GM10248 (cell line): ENCODE measurements at regions of chr12 and their contacts with region 1.

Region 1: DNA sequence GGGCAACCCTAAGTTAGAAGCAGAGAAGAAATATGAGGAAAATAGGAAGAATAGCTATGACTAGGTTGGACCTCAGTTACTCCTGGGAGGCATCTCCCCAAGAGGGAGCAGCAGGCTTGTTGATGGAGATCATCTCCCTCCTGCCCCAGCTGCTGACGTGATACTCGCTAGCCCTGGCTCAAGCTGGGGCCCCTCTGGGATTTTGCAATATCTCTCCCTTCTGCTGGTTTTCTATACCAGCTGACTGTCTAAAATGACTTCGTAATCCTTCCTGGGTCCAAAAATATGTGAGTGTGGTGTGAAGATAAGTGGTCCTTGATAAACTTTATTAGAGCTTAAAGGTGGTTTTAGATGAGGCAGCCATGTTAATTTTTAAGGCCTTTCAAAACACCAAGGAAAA is 4.5 kb upstream of the HECTD4 start:
- DNase-seq: no peak
- CTCF ChIP-seq: no peak

Region 2: DNA sequence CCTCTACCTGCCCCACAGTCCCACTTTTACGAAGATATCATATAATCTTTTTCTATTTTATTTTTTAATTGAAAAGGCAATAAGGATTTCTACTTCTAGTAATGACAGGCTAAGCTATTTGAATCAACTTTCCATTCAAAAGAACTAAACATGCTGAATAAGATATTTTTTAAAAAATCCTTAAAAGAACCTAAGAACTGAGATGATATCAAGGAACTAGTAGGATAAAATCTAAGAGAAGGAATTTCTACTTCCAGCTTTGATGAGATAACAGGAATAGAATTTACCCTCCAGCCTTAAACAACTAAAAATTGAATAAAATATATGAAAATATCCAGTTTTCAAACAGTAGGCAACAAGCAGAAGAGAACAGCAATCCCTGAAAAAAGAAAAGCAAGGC is 442.8 kb before region 1 on chr12:
- CTCF ChIA-PET with region 1: interaction called, 16 read pairs
- POLR2A ChIA-PET with region 1: no interaction called
- DNase-seq: no peak
- CTCF ChIP-seq: no peak

Region 3: GRCh38 chr12:112198120-112198733 is 188.5 kb before region 1 on chr12:
- CTCF ChIA-PET with region 1: interaction called, 82 read pairs
- POLR2A ChIA-PET with region 1: no interaction called
- DNase-seq: peak; percentile 78
- CTCF ChIP-seq: peak; percentile 67

Region 4: DNA sequence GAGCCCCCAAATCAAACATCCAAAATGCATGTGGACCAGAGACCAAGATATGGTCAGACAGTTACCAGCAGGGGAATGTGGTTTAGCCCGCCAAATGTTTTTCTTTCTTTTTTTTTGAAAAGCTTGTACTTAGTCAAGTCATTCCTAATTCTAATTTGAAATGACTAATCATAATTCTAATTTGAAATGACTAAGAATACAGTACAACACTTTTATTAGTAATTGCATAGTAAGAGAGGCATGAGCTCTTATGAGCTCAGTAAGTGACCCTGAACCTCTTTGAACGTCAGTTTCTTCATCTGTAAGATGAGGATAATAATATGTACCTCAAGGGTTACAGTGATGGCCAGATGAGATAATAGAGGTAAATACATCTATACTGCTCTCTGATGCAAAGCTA is 76.9 kb before region 1 on chr12:
- CTCF ChIA-PET with region 1: interaction called, 10 read pairs
- POLR2A ChIA-PET with region 1: no interaction called
- DNase-seq: no peak
- CTCF ChIP-seq: no peak

Region 5: GRCh38 chr12:112375105-112375504 is 11.6 kb before region 1 on chr12:
- CTCF ChIA-PET with region 1: interaction called, 11 read pairs
- POLR2A ChIA-PET with region 1: no interaction called
- DNase-seq: no peak
- CTCF ChIP-seq: no peak

Region 6: GRCh38 chr12:112409064-112409905 is 22.6 kb after region 1 on chr12 and contains the start of gene RPL6:
- CTCF ChIA-PET with region 1: interaction called, 14 read pairs
- POLR2A ChIA-PET with region 1: no interaction called
- DNase-seq: peak; percentile 87
- CTCF ChIP-seq: no peak

Region 7: GRCh38 chr12:112422531-112422930 is 35.8 kb after region 1 on chr12:
- CTCF ChIA-PET with region 1: no interaction called
- POLR2A ChIA-PET with region 1: no interaction called
- DNase-seq: no peak
- CTCF ChIP-seq: no peak

Region 8: GRCh38 chr12:112738531-112738930 is 351.8 kb after region 1 on chr12:
- CTCF ChIA-PET with region 1: no interaction called
- POLR2A ChIA-PET with region 1: no interaction called
- DNase-seq: no peak
- CTCF ChIP-seq: no peak